IMR-90 (cell line): ENCODE measurements at regions of chr17 and their contacts with region 1.

Region 1: DNA sequence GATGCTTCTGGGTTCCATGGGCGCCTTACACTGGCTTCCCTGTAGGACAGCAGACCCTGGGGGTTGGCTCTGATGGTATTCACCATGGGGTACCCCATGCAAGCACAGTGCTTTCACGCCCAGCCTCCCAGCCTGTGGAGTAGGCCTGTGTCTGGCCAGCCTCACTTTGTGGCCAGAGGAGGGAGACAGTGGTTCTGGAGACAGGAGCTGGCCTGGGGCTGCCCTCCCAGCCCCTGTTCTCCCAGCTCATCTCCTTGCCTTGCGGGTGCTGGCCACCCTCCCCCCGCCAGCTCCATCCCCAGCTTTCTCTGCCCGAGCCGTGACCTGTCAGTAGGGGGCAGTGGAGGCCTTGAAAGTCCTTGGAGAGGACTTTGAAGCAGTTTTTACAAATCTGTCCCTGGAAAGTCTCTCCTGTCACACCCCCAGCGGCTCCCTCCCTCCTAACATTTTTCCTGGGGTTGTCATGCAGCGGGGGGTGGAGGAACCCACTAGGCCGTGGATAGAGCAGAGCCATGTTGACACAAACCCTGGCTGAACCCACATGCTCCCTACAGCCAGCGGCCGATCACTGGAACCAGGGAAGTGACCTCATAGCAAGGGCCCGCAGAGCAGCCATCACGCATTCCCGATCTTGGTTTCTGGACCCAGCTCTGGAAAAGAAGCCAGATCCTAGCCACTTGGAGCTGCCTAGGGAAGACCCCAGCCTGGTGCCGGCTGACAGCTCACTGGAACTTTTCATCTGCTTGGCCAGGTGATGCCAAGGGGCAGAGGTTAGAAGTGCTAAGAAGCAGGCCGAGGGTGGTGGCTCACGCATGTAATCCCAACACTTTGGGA is 289.4 kb downstream of the SEC14L1 start:
- DNase-seq: peak; percentile 99
- ATAC-seq: peak; percentile 77
- H3K4me3 ChIP-seq: no peak overlapping the region
- H3K27ac ChIP-seq: peak overlapping the region; percentile 90
- H3K4me1 ChIP-seq: peaks cover 76% of the 10 kb centered on the region
- H3K27me3 ChIP-seq: no peaks in the 10 kb centered on the region
- CTCF ChIP-seq: peak; percentile 96
- POLR2A ChIP-seq: peak; percentile 40; the same call in 1 of the 2 replicates
- RAD21 ChIP-seq: peak; percentile 87

Region 2: DNA sequence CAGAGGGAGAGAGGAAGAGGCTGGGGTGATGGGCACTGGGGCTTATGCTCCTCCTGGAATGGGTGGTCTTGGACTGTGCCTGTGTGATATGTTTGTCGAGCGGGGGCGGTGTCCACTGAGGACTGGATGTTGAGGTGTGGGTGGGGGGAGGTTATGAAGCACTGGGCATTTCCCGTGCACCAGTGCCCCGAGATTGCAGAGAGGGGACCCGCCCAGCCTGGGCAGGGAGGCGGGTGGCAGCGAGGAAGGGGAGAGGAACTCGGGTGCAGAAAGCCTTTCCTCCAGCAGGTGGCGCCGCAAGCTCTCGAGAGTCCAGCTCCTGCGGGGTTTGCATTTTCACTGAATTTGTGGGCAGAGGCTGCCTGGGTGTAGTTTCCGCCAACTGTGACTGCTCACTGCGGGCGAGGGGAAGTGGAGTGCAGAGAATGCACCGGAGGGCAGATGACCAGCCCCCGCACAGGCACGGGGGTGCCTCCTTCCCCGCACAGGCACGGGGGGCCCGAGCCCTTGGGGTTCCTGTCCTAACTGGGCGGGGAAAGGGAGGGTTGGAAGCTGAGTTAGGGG is 98.8 kb before region 1 on chr17:
- CTCF ChIA-PET with region 1: interaction called, 3 read pairs
- POLR2A ChIA-PET with region 1: no interaction called
- dilution Hi-C with region 1: no loop called
- in situ Hi-C with region 1: no loop called
- intact Hi-C with region 1: loop called (anchors 1 kb)
- DNase-seq: peak; percentile 87
- ATAC-seq: peak; percentile 95
- H3K4me3 ChIP-seq: no peak overlapping the region
- H3K27ac ChIP-seq: peak overlapping the region; percentile 71
- H3K4me1 ChIP-seq: peaks cover 3% of the 10 kb centered on the region
- H3K27me3 ChIP-seq: no peaks in the 10 kb centered on the region
- CTCF ChIP-seq: peak; percentile 96
- POLR2A ChIP-seq: peak; percentile 45; the same call in 1 of the 2 replicates
- RAD21 ChIP-seq: peak; percentile 99

Region 3: DNA sequence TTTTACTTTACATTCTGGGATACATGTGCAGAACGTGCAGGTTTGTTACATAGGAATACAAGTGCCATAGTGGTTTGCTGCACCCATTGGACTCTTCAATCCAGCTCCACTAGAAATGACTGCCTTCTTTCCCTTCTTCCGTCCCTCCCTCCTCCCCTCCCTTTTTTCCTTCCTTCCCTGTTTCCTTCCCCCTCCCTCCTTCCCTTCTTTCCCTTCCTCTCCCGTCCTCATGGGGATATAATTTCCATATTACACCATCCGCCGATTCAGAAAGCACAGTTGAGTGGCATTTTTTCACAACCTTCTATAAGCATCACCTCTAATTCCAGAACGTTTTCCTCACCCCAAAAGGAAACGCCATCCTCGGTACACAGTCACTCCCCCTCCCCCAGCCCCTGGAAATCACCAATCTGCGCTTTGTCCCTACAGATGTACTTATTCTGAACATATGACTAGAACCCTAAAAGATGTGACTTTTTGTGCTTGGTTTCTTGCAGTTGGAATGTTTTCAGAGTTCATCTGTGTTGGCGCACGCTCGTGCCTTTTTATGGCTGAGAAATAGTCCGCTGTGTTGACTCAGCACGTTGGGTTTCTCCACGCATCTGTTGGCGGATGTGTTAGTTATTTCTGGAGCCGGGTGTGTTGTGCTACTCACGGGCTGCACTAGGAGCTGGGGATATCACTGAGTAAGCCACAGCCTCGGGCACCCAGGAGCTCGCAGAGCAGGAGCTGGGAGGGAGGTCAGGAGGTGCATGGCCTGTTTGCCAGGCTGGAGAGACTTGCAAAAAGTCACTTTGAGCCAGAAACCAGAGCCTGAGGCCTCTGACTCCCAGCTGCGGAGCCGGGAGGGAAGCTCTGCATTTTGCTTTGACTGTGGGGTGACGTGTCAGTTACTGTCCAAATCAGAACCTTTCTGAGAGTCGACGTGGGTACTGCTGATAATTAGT is 47.1 kb after region 1 on chr17:
- CTCF ChIA-PET with region 1: no interaction called
- POLR2A ChIA-PET with region 1: interaction called, 3 read pairs
- dilution Hi-C with region 1: no loop called
- in situ Hi-C with region 1: no loop called
- intact Hi-C with region 1: loop called (anchors 1 kb)
- DNase-seq: peak; percentile 98
- ATAC-seq: peak; percentile 76
- H3K4me3 ChIP-seq: no peak overlapping the region
- H3K27ac ChIP-seq: peak overlapping the region; percentile 38
- H3K4me1 ChIP-seq: peaks cover 68% of the 10 kb centered on the region
- H3K27me3 ChIP-seq: no peaks in the 10 kb centered on the region
- CTCF ChIP-seq: no peak
- POLR2A ChIP-seq: no peak; the same call in 1 of the 2 replicates
- RAD21 ChIP-seq: peak; percentile 27

Region 4: DNA sequence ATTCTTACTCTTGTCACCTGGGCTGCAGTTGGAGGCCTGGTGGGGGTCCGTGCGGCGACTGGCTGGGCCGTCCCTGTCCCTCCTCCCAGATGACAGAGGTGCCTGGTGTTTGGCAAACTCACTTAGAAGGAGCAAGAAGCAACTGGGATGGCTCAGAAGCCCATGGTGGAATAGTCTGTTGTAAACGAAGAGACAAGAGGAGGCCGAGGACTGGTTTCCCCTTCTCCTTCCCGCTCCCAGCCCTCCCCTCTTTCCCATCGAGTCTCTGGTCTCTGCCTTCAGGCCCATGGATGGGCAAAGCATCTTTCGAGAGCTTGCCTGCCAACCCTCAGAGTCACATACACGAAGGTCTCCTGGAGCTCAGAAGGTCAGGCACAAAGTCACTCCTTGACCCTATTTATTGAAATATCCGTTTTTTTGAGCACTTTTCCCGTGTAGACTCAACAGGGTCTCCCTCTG is 75.1 kb after region 1 on chr17:
- CTCF ChIA-PET with region 1: interaction called, 3 read pairs
- POLR2A ChIA-PET with region 1: interaction called, 27 read pairs
- dilution Hi-C with region 1: no loop called
- in situ Hi-C with region 1: no loop called
- intact Hi-C with region 1: no loop called
- DNase-seq: no peak
- ATAC-seq: no peak
- H3K4me3 ChIP-seq: no peak overlapping the region
- H3K27ac ChIP-seq: no peak overlapping the region
- H3K4me1 ChIP-seq: no peaks in the 10 kb centered on the region; the same call in 1 of the 2 replicates
- H3K27me3 ChIP-seq: no peaks in the 10 kb centered on the region
- CTCF ChIP-seq: no peak
- POLR2A ChIP-seq: no peak
- RAD21 ChIP-seq: no peak